T-cell (primary cell): ENCODE measurements at regions of chr3 and their contacts with region 1.

Region 1: DNA sequence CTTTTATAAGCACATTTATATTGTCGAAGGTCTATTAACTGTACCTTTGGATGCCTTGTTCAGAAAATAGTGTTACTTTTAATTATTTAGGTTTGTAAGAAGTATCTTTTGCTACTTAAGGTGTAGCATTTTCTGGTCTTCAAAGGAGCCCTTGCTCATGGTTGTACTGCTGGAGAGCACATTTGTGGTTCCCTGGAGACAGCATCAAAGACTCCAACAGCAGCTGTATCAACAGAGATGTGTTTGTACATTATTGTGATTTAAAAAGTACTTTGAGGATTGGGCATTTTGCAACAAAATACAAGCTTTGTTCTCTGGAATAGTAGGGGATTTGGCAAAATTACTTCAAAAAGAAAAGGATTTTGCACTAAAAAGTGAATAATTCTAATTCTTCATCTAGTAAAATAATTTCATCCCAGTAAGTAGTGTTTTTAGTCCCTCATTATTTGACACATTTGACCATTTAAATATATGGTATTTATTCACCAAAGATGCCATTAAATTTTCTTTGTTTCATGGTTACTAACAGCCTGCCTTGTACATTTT is 16.5 kb downstream of the TBC1D23 start:
- DNase-seq: no peak
- ATAC-seq: no peak
- H3K4me3 ChIP-seq: no peak overlapping the region
- H3K4me3 Mint-ChIP-seq: no peak overlapping the region
- H3K27ac ChIP-seq: no peak overlapping the region
- H3K27ac Mint-ChIP-seq: no peak overlapping the region
- H3K4me1 ChIP-seq: no peaks in the 10 kb centered on the region
- H3K4me1 Mint-ChIP-seq: peaks cover 29 to 38% (median 37%) of the 10 kb centered on the region in 3 donors
- H3K27me3 ChIP-seq: no peaks in the 10 kb centered on the region
- H3K27me3 Mint-ChIP-seq: no peaks in the 10 kb centered on the region

Region 2: GRCh38 chr3:99442599-99442998 is 834.7 kb before region 1 on chr3:
- CTCF ChIA-PET with region 1: no interaction called
- POLR2A ChIA-PET with region 1: no interaction called
- DNase-seq: no peak
- ATAC-seq: no peak
- H3K4me3 ChIP-seq: no peak overlapping the region
- H3K4me3 Mint-ChIP-seq: no peak overlapping the region
- H3K27ac ChIP-seq: no peak overlapping the region
- H3K27ac Mint-ChIP-seq: no peak overlapping the region
- H3K4me1 ChIP-seq: no peaks in the 10 kb centered on the region
- H3K4me1 Mint-ChIP-seq: no peaks in the 10 kb centered on the region
- H3K27me3 ChIP-seq: no peaks in the 10 kb centered on the region
- H3K27me3 Mint-ChIP-seq: no peaks in the 10 kb centered on the region

Region 3: GRCh38 chr3:99586701-99587100 is 690.6 kb before region 1 on chr3:
- CTCF ChIA-PET with region 1: no interaction called
- POLR2A ChIA-PET with region 1: no interaction called
- DNase-seq: no peak
- ATAC-seq: no peak
- H3K4me3 ChIP-seq: no peak overlapping the region
- H3K4me3 Mint-ChIP-seq: no peak overlapping the region
- H3K27ac ChIP-seq: no peak overlapping the region
- H3K27ac Mint-ChIP-seq: peak overlapping the region in 1 of 2 donors; percentile 7
- H3K4me1 ChIP-seq: no peaks in the 10 kb centered on the region
- H3K4me1 Mint-ChIP-seq: no peaks in the 10 kb centered on the region
- H3K27me3 ChIP-seq: no peaks in the 10 kb centered on the region
- H3K27me3 Mint-ChIP-seq: peaks cover 0 to 6% of the 10 kb centered on the region in 2 donors

Region 4: GRCh38 chr3:100231668-100232067 is 45.7 kb before region 1 on chr3:
- CTCF ChIA-PET with region 1: no interaction called
- POLR2A ChIA-PET with region 1: no interaction called
- DNase-seq: no peak
- ATAC-seq: no peak
- H3K4me3 ChIP-seq: no peak overlapping the region
- H3K4me3 Mint-ChIP-seq: no peak overlapping the region
- H3K27ac ChIP-seq: no peak overlapping the region
- H3K27ac Mint-ChIP-seq: no peak overlapping the region
- H3K4me1 ChIP-seq: no peaks in the 10 kb centered on the region
- H3K4me1 Mint-ChIP-seq: peaks cover 0 to 8% (median 5%) of the 10 kb centered on the region in 3 donors
- H3K27me3 ChIP-seq: no peaks in the 10 kb centered on the region
- H3K27me3 Mint-ChIP-seq: peaks cover 1 to 5% of the 10 kb centered on the region in 2 donors

Region 5: DNA sequence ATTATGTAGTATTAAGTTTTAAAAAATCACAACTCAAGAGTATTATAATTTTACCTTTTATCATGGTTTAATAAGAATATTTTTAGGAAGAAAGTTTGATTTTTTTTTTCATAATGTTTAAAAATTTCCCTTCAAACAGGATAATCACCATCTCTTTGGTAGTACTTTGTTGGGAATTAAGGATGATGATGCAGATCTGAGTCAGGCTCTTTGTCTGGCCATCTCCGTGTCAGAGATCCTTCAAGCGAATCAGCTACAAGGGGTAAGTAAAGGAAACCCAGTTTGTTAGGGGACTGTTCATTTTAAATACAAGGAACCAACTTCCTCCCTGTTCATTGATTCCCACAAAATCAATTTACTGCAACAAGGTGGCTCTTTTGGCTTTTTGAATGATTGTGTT is 20.5 kb after region 1 on chr3:
- CTCF ChIA-PET with region 1: no interaction called
- POLR2A ChIA-PET with region 1: interaction called, 3 to 13 read pairs
- DNase-seq: no peak
- ATAC-seq: no peak
- H3K4me3 ChIP-seq: no peak overlapping the region
- H3K4me3 Mint-ChIP-seq: no peak overlapping the region
- H3K27ac ChIP-seq: no peak overlapping the region
- H3K27ac Mint-ChIP-seq: no peak overlapping the region
- H3K4me1 ChIP-seq: no peaks in the 10 kb centered on the region
- H3K4me1 Mint-ChIP-seq: no peaks in the 10 kb centered on the region
- H3K27me3 ChIP-seq: no peaks in the 10 kb centered on the region
- H3K27me3 Mint-ChIP-seq: no peaks in the 10 kb centered on the region

Region 6: DNA sequence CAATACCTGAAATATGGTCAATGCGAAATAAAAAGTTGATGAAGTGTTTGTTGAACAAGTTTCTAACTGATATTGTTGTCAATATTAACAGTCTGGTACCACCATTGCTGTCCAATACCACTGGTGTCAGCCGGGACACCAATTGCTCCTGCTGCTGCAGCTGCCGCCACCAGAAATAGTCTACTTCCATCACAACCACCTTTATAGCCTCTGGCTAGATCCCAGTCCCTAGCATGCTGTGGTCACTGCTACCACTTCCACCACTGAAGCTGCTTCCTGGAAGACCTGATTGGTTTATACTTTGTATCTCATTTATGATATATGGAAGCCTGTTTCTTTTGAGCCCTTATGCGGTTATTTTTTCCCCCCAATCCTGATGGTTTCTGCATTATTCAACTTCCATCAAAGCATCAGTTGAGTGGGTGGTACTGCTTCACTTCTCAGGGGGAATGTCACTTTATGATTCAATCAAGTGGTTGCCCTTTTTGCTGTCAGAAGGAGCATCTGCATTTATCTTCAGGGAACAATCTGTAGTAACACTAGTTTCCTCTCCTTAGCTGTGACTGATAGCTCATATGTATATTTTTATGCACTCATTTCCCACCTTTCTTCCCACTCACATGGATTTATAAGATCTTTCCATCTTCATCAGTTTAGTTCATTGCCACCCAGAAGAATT is 135.7 kb after region 1 on chr3:
- CTCF ChIA-PET with region 1: no interaction called
- POLR2A ChIA-PET with region 1: no interaction called
- DNase-seq: no peak
- ATAC-seq: no peak
- H3K4me3 ChIP-seq: no peak overlapping the region
- H3K4me3 Mint-ChIP-seq: no peak overlapping the region
- H3K27ac ChIP-seq: no peak overlapping the region
- H3K27ac Mint-ChIP-seq: no peak overlapping the region
- H3K4me1 ChIP-seq: no peaks in the 10 kb centered on the region
- H3K4me1 Mint-ChIP-seq: no peaks in the 10 kb centered on the region
- H3K27me3 ChIP-seq: no peaks in the 10 kb centered on the region
- H3K27me3 Mint-ChIP-seq: no peaks in the 10 kb centered on the region